ENCODE measurements at regions of chr10 and their contacts with region 1.

Region 1: DNA sequence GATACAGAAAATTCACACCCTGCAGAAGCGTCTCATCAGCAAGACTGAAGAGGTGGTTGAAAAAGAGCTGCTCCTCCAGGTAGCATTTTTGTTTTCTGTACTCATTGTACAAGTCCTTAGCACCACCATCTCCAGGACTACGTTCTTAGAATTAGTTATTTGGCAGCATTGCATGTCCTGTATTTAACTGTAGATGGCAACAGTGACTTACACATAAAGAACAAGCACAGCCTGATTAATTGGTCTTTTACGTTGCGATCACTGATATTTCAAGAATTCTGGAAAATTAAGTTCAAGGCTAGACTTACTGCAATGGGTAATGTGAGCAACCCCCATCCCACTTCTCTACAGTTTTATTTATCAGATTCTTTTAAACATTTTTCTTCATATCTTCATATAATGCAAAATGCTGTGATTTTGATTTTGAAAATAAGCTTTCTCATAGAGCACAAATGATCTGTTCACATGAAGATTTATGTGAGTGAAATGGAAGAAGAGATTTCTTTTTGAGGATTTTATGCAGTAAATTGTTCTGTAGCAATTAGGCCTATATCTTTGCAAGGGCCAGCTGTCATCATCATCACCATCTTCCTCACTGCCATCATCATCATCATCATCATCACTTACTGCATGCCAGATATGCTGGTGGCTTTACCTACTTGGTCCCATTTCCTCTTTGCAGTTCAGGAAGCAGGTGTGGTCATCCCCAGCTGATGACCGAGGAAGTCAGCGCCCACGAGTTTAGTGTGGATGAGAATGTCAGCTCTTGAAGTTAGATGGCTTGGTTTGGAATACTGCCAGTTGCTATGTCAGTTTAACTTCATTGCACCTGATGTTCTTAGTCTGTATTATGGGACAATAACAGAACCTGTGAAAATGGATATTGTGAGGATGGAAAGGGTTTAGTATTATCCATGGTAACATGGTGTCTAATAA is 53.4 kb downstream of the CFAP58 start:
- DNase-seq: peak; percentile 9
- H3K4me3 ChIP-seq: no peak overlapping the region
- H3K27me3 ChIP-seq: no peaks in the 10 kb centered on the region
- CTCF ChIP-seq: peak; percentile 72

Region 2: DNA sequence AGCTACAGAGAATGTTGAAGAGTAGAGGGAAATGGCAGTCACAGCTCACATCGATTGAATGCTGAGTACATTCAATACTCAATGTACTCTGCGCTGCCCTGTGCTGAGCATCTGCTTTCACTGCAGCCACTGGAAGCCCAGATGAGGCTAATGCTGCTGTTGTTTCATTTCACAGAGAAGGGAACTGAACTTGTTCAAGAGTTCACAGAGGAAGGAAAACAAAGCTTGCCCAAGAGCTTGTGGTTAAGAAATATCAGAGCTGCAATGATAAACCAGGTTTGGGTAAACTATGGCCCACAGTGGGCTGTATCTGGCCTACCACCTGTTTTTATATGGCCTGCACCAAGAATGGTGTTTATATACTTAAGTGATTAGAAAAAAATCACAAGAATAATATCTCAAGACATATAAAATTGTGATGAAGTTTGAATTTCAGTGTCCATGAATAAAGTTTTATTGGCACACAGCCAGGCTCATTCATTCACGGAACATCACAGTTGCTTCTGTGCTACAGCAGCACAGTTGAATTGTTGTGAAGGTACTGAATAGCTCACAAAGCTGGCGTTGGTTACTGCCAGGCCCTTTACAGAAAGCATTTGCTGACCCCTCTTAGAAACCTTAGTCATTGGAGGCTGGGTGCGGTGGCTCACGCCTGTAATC is 10.8 kb after region 1 on chr10:
- CTCF ChIA-PET with region 1: interaction called, 14 read pairs
- POLR2A ChIA-PET with region 1: no interaction called
- DNase-seq: no peak
- H3K4me3 ChIP-seq: no peak overlapping the region
- H3K27me3 ChIP-seq: no peaks in the 10 kb centered on the region
- CTCF ChIP-seq: no peak

Region 3: GRCh38 chr10:104498331-104499081 is 91.5 kb after region 1 on chr10:
- CTCF ChIA-PET with region 1: interaction called, 12 read pairs
- POLR2A ChIA-PET with region 1: no interaction called
- DNase-seq: no peak
- H3K4me3 ChIP-seq: no peak overlapping the region
- H3K27me3 ChIP-seq: peaks cover 2% of the 10 kb centered on the region; the same call in 1 of the 2 replicates
- CTCF ChIP-seq: no peak

Region 4: GRCh38 chr10:104614245-104614831 is 207.4 kb after region 1 on chr10:
- CTCF ChIA-PET with region 1: interaction called, 36 read pairs
- POLR2A ChIA-PET with region 1: no interaction called
- DNase-seq: no peak
- H3K4me3 ChIP-seq: no peak overlapping the region
- H3K27me3 ChIP-seq: no peaks in the 10 kb centered on the region
- CTCF ChIP-seq: peak; percentile 60